ENCODE measurements at regions of chr2 and their contacts with region 1.

Region 1: DNA sequence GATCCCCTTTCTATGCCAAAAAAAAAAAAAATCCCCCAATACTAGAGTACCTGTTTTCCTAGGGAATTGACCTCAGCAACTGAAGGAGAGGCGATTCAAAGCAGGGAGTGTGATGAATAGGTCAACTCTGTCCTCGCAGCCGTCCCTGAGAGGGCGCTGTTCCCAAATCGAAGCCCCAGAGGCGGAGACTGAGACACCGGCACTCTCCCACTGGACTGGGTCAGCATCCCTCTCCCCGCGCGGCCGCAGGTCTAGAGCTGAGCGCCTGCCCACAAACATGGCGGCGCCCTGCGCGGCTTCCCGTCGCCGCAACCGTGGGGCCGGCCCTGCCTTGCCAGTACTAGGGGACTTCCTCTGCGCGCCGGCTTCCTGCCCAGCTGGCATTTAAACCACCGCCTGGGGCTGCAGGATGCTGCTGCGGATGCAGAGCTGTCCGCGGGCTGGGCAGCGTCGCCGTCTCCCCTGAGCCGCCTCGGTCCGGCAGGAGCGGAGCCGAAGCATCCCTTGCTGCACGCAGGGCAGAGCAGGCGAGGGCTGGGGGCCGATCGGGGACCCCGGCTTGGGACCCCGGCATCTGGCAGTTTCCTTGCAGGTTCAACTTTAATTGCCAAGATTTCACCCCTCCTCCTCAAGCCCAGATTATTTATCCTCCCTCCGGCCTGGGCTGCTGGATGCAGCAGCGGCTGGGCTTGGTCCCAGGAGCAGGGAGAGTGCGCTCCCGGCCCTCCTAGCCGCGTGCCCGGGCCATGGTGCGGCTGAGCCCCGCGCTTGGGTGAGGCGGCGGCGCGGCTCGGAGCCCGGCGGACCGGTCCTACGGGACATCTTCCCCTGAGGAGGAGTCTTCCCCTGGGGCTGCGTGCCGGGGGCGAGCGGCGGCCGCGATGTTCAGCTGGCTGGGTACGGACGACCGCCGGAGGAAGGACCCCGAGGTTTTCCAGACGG is at the start of gene EHD3:
- DNase-seq: peak; percentile 89
- H3K4me3 ChIP-seq: peak within 1 kb of the TSS; percentile 81
- H3K27ac ChIP-seq: peak within 1 kb of the TSS; percentile 91
- H3K4me1 ChIP-seq: peaks cover 82% of the 10 kb centered on the region
- H3K27me3 ChIP-seq: no peaks in the 10 kb centered on the region
- CTCF ChIP-seq: peak; percentile 77
- total RNA-seq, gene EHD3: 29.7 TPM

Region 2: DNA sequence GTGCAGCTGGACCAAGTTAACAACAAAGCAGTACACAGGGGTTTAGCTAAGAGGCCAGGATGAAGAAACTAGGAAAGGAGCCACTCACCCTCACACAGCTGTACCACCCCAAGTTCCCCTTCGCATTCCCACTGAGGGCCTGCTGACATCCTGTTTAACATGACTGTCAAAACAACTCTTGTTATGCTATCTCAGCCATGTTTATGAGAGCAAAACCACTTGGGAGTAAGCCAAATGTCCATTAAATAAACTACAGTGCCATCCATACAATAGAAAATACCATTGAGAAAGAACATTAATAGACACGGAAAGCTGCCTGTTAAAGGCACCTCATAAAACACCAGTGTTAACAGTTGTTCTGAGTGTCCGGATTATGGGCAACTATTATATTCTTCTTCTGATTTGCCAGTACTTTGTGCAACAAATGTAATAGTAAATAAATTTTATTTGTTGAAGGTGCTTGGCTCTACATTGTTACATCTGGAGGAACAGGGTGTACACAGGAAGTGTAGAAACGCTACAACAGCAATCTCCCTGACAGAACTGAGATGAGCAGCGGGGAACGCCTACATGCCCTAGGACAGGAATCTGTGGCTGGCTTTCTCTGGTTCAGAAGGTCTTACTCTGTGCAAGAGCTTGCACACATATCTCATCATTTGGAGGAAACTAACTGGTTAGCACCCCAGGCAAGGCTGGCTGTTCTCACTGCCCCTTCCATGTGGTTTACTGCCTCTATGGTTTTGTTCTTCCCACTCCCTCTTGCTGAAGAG is 85.6 kb after region 1 on chr2:
- intact Hi-C with region 1: loop called (anchors 10 kb)
- DNase-seq: no peak
- H3K4me3 ChIP-seq: no peak overlapping the region
- H3K27ac ChIP-seq: peak overlapping the region; percentile 62
- H3K4me1 ChIP-seq: peaks cover 50% of the 10 kb centered on the region
- H3K27me3 ChIP-seq: no peaks in the 10 kb centered on the region
- CTCF ChIP-seq: no peak

Measured in left ventricle myocardium inferior (tissue), 1 donor.